GM12878 (cell line): ENCODE measurements at regions of chr2 and their contacts with region 1.

Region 1: DNA sequence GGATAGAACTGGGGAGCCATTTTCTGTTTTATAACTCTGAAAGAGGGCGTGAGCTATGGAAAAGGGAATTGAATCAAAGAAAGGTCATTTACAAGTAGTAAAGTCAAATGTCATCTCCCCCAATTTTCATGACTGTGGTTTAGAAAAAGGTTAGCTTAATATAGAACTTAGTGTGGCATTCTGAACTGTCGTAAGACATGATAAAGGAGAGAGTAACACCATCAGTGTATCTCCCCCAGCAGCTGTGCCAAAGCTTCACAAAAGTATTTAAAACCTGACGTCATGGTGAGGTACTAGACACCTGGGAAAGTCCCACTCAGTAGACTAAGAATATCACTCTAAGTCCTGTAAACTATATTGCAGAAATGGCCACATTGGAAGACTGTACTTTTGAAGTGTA is 5.8 kb upstream of the IKZF2 start:
- DNase-seq: no peak
- ATAC-seq: peak; percentile 80
- H3K4me3 ChIP-seq: no peak overlapping the region; the same call in 1 of the 2 replicates
- H3K27ac ChIP-seq: peak overlapping the region; percentile 65
- H3K4me1 ChIP-seq: peaks cover 18% of the 10 kb centered on the region
- H3K27me3 ChIP-seq: no peaks in the 10 kb centered on the region
- CTCF ChIP-seq: no peak
- EP300 ChIP-seq: peak; percentile 86 to 88; a peak in 2 of 4 replicates
- POLR2A ChIP-seq: no peak
- RAD21 ChIP-seq: peak; percentile 31; the same call in 1 of the 2 replicates

Region 2: DNA sequence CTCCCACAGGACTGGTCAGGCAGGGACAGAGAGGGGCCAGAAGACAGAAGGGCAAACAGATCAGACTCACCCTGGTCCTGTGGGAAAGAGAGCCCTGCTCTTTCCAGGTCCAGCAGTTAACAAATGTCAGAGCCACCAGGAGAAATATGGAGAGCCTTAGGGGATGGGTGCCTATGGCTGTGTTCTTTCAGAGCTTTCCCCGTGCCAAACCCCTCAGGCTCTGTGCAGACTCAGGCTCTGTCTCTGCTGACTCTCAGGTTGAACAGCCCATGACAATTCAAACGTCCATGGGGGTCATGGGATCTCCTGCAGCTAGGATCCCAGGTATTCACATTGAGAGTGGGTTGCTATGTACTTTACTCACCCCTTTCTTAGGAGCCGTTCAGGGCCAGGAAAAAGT is 497.8 kb before region 1 on chr2:
- CTCF ChIA-PET with region 1: no interaction called
- POLR2A ChIA-PET with region 1: no interaction called
- RAD21 ChIA-PET with region 1: no interaction called
- SMC1A ChIA-PET with region 1: no interaction called
- in situ Hi-C with region 1: no loop called
- intact Hi-C with region 1: no loop called
- DNase-seq: no peak
- ATAC-seq: no peak
- H3K4me3 ChIP-seq: no peak overlapping the region
- H3K27ac ChIP-seq: no peak overlapping the region
- H3K4me1 ChIP-seq: no peaks in the 10 kb centered on the region
- H3K27me3 ChIP-seq: no peaks in the 10 kb centered on the region; a peak in 1 of 4 replicates
- CTCF ChIP-seq: no peak
- EP300 ChIP-seq: no peak
- POLR2A ChIP-seq: no peak
- RAD21 ChIP-seq: no peak

Region 3: GRCh38 chr2:212730994-212731393 is 426.2 kb before region 1 on chr2:
- CTCF ChIA-PET with region 1: interaction called, 3 read pairs
- POLR2A ChIA-PET with region 1: no interaction called
- RAD21 ChIA-PET with region 1: interaction called, 3 read pairs
- SMC1A ChIA-PET with region 1: no interaction called
- in situ Hi-C with region 1: no loop called
- intact Hi-C with region 1: loop called (anchors 2 kb)
- DNase-seq: peak; percentile 79
- ATAC-seq: peak; percentile 78
- H3K4me3 ChIP-seq: no peak overlapping the region
- H3K27ac ChIP-seq: 0 out of 2 replicates have a peak overlapping the region, but pooled peaks have one; percentile 27
- H3K4me1 ChIP-seq: peaks cover 16% of the 10 kb centered on the region
- H3K27me3 ChIP-seq: no peaks in the 10 kb centered on the region
- CTCF ChIP-seq: no peak
- EP300 ChIP-seq: peak; percentile 55 to 81; a peak in 2 of 4 replicates
- POLR2A ChIP-seq: no peak
- RAD21 ChIP-seq: peak; percentile 21; the same call in 1 of the 2 replicates

Region 4: DNA sequence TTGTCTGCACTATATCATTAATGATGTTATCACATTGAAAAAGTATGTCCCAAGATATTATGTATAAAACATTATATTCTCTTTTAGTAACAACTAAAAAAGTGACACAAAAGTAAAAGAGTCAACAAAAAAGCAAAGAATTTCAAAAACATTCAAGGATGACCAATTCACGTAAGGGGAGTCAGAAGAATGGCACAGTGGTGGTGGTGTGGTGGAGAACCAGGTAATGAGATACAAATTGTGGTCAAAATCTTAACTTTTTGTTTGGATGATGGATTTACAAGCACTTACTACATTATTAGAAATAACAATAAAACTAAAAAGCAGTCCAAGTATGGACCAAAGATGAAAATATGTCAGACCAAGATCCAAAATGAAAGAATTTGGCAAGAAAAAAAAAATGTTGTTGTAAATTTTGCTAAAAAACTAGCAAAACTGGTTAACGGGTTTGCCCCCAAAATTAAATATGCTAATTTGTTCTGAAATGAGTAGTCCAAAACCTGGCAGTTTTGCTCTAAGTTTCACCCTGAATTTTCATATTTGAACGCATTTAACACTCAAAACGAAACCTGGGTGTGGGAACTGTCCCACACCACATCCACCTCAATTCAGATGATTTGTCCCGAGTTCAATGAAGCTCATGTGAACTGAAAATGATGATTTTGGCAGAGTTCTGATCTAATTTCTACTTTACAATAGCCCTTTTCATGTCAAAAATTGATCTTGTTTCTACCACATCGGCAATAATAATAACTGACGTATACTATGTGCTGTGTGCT is 141.7 kb before region 1 on chr2:
- CTCF ChIA-PET with region 1: interaction called, 35 read pairs
- POLR2A ChIA-PET with region 1: interaction called, 183 read pairs
- RAD21 ChIA-PET with region 1: interaction called, 386 read pairs
- SMC1A ChIA-PET with region 1: interaction called, 430 read pairs
- in situ Hi-C with region 1: loop called (anchors 5 kb)
- intact Hi-C with region 1: loop called (anchors 2 kb)
- DNase-seq: peak; percentile 98
- ATAC-seq: peak; percentile 55
- H3K4me3 ChIP-seq: peak overlapping the region; percentile 65
- H3K27ac ChIP-seq: peak overlapping the region; percentile 96
- H3K4me1 ChIP-seq: peaks cover 20% of the 10 kb centered on the region
- H3K27me3 ChIP-seq: no peaks in the 10 kb centered on the region
- CTCF ChIP-seq: no peak
- EP300 ChIP-seq: peak; percentile 92 to 93
- POLR2A ChIP-seq: no peak
- RAD21 ChIP-seq: no peak

Region 5: GRCh38 chr2:213145715-213146242 is 11.5 kb before region 1 on chr2:
- CTCF ChIA-PET with region 1: interaction called, 3 read pairs
- POLR2A ChIA-PET with region 1: interaction called, 15 read pairs
- RAD21 ChIA-PET with region 1: interaction called, 50 read pairs
- SMC1A ChIA-PET with region 1: interaction called, 72 read pairs
- in situ Hi-C with region 1: no loop called
- intact Hi-C with region 1: no loop called
- DNase-seq: no peak
- ATAC-seq: peak; percentile 9
- H3K4me3 ChIP-seq: peak overlapping the region; percentile 60
- H3K27ac ChIP-seq: peak overlapping the region; percentile 9; the same call in 1 of the 2 replicates
- H3K4me1 ChIP-seq: no peaks in the 10 kb centered on the region
- H3K27me3 ChIP-seq: no peaks in the 10 kb centered on the region
- CTCF ChIP-seq: no peak
- EP300 ChIP-seq: no peak
- POLR2A ChIP-seq: no peak
- RAD21 ChIP-seq: no peak

Region 6: DNA sequence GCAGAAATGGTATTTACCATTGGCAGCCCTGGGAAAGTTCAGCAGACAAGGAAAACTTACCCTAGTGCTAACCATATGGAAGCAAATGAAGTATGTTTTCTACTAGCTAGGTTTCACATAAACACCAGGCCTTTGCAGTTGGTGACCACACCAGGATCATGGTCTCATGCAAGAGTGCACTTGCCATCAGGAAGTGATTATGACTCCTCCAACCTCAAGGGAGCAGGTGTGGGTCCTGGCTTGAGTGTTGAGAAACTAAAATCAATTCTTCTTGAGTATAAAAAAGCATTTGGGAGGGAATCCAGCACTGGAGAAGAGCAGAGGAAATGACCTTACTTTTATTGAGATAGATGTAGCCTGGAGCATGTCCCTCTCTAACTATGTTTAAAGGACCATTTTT is 70.2 kb after region 1 on chr2:
- CTCF ChIA-PET with region 1: interaction called, 19 read pairs
- POLR2A ChIA-PET with region 1: interaction called, 232 read pairs
- RAD21 ChIA-PET with region 1: interaction called, 540 read pairs
- SMC1A ChIA-PET with region 1: interaction called, 467 read pairs
- in situ Hi-C with region 1: loop called (anchors 5 kb)
- intact Hi-C with region 1: no loop called
- DNase-seq: peak; percentile 88
- ATAC-seq: peak; percentile 82
- H3K4me3 ChIP-seq: no peak overlapping the region
- H3K27ac ChIP-seq: peak overlapping the region; percentile 92
- H3K4me1 ChIP-seq: peaks cover 49% of the 10 kb centered on the region
- H3K27me3 ChIP-seq: no peaks in the 10 kb centered on the region
- CTCF ChIP-seq: no peak
- EP300 ChIP-seq: no peak; a peak in 3 of 4 replicates
- POLR2A ChIP-seq: no peak
- RAD21 ChIP-seq: peak; percentile 30; the same call in 1 of the 2 replicates